ENCODE measurements at regions of chr1 and their contacts with region 1.

Region 1: DNA sequence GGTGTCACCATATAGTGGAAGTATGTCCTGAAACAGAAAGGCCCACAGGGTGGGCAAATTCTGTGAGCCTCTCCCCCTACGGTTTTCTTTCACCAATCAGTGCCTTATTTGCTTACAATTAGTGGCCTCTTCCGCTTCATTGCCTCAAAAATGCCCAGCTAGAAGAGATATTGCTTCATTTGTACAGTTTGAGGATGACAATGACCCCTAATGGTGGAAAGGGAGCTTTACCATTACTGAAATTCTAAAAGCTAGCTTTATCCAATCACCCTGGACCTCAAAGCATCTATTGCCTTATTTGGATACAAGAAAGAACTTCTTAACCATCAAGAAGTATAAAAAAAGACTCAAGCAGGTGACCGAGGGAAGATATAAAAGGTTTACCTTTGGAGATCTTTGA is 49.6 kb downstream of the LRRC71 start:
- DNase-seq: no peak
- ATAC-seq: no peak
- H3K4me3 ChIP-seq: no peak overlapping the region
- H3K27ac ChIP-seq: no peak overlapping the region
- H3K4me1 ChIP-seq: no peaks in the 10 kb centered on the region
- H3K27me3 ChIP-seq: no peaks in the 10 kb centered on the region
- CTCF ChIP-seq: peak; percentile 28; the same call in 1 of the 2 replicates

Region 2: DNA sequence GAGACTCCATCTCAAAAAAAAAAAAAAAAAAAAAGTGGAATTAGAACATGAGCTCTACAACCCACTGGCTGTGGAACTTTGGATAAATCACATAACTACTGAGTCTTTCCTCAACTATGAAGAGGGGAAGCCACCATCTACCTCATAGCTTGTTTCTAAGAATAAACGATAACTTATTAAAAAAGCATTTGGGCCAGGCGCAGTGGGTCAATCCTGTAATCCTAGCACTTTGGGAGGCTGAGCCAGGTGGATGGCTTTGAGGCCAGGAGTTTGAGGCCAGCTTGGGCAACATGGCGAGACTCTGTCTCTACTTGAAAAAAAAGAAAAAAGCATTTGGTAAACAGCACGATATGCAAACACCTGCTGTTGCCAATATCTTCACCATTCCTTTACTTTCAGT is 437.6 kb before region 1 on chr1:
- CTCF ChIA-PET with region 1: no interaction called
- POLR2A ChIA-PET with region 1: interaction called, 12 read pairs
- in situ Hi-C with region 1: no loop called
- intact Hi-C with region 1: no loop called
- DNase-seq: no peak
- ATAC-seq: no peak
- H3K4me3 ChIP-seq: no peak overlapping the region
- H3K27ac ChIP-seq: no peak overlapping the region
- H3K4me1 ChIP-seq: no peaks in the 10 kb centered on the region
- H3K27me3 ChIP-seq: no peaks in the 10 kb centered on the region
- CTCF ChIP-seq: no peak